Activated naive CD4-positive, alpha-beta T cell treated with anti-CD3 and anti-CD28 coated beads for 36 hours (primary cell): ENCODE measurements at regions of chr3 and their contacts with region 1.

Region 1: DNA sequence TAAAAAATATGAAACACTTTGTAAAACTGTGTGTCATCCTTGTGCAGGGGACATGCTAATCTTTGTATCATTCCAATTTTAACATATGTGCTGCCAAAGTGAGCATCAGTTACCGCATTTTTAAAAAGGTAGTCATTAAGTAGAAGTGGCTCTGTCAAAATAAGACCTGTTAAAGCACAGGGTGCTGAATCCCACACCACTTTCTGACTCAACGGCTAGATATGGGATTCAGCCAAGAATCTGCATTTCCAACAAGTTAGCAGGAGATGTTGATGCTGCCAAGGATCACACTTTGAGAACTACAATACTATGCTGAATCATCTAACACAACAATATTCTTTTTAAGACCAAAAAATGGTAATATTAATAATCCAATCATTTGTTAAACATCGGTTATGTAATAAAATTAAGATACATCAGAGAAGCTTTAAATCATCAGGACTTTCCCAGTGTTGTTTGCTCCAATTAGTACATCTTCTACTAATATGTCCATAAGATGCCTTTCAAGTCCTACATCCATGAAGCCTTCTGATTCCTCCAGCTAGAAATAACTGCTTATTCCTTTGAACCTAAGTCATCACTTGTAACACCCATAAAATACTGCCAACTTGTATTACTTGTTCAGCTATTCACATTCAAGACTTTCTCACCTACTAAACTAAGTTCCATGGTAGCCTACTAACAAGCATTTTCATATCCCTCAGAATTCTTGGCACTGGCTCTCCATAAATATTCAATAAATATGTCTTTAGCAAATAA is 71.1 kb downstream of the TBL1XR1 start:
- DNase-seq: no peak
- H3K4me3 Mint-ChIP-seq: no peak overlapping the region
- H3K27ac Mint-ChIP-seq: no peak overlapping the region
- H3K4me1 Mint-ChIP-seq: peaks cover 76% of the 10 kb centered on the region
- H3K27me3 Mint-ChIP-seq: no peaks in the 10 kb centered on the region

Region 2: DNA sequence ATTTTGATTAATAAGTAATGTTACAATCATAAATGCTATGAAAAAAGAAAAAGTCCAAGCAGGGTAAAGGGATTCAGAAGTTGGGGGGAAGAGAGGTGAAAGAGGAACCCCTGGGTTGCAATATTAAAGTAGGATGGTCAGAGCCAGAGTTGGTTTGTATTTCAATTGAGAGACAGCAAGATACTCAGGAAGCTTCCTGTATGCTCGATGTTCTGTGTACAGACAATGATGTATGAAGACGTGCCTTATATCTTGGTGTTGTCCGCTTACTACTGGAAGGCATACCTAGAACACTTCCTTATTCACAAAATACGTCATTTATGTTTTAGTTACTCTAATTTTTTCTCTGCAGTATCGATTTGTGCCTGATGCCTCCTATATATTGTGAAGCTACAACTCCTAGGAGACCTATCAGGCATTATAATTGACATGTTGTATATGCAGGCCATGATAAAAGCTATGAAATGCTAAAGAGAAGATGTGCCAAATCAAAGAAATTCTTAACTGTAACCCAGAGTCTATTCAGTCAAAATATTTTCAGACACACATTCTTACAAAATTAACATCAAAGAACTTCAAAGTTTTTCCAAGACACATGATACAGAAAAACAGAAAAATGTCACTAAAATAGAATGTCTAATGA is 16.4 kb before region 1 on chr3:
- CTCF ChIA-PET with region 1: no interaction called
- intact Hi-C with region 1: loop called (anchors 2 kb)
- DNase-seq: no peak
- H3K4me3 Mint-ChIP-seq: no peak overlapping the region
- H3K27ac Mint-ChIP-seq: peak overlapping the region; percentile 46
- H3K4me1 Mint-ChIP-seq: peaks cover 66% of the 10 kb centered on the region
- H3K27me3 Mint-ChIP-seq: no peaks in the 10 kb centered on the region

Region 3: DNA sequence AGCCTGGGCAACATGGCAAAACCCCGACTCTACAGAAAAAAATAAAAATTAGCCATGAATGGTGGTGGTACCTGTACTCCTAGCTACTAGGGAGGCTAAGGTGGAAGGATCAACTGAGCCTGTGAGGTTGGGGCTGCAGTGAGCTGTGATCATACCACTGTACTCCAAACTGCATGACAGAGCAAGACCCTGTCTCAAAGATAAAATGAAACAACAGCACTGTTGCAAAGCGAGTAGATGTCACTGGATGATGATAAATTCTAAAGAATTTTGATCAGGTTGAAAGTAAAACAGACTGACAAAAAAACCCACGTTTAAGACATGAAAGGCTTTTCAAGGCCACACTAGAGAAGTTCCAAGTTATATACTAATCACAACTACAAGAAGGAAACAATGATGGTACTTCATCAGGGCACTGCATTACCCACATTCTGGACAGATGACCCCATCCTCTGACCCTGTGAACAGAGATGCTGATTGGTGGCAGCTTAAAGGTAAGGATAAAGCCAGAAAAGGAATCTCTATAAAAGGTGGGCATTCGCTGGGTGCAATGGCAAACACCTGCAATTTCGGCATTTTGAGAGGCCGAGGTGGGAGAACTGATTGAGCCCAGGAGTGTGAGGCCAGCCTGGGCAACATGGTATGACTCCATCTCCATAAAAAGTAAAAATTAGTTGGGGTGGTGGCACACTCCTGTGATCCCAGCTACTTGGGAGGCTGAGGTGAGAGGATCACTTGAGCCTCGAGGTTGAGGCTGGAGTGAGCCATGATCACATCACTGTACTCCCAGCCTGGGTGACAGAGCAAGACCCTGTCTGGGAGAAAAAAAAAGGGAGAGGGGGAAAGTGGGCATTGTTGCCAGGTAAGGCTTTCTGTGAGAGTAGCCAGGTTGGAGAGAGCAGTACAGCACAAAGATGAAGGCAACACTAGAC is 11.8 kb after region 1 on chr3:
- CTCF ChIA-PET with region 1: interaction called, 5 read pairs
- intact Hi-C with region 1: loop called (anchors 1 kb)
- DNase-seq: no peak
- H3K4me3 Mint-ChIP-seq: no peak overlapping the region
- H3K27ac Mint-ChIP-seq: peak overlapping the region; percentile 31
- H3K4me1 Mint-ChIP-seq: peaks cover 74% of the 10 kb centered on the region
- H3K27me3 Mint-ChIP-seq: no peaks in the 10 kb centered on the region

Region 4: GRCh38 chr3:177144923-177145780 is 19.0 kb after region 1 on chr3:
- CTCF ChIA-PET with region 1: interaction called, 5 read pairs
- intact Hi-C with region 1: loop called (anchors 2 kb)
- DNase-seq: no peak
- H3K4me3 Mint-ChIP-seq: no peak overlapping the region
- H3K27ac Mint-ChIP-seq: peak overlapping the region; percentile 56
- H3K4me1 Mint-ChIP-seq: peaks cover 67% of the 10 kb centered on the region
- H3K27me3 Mint-ChIP-seq: no peaks in the 10 kb centered on the region

Region 5: DNA sequence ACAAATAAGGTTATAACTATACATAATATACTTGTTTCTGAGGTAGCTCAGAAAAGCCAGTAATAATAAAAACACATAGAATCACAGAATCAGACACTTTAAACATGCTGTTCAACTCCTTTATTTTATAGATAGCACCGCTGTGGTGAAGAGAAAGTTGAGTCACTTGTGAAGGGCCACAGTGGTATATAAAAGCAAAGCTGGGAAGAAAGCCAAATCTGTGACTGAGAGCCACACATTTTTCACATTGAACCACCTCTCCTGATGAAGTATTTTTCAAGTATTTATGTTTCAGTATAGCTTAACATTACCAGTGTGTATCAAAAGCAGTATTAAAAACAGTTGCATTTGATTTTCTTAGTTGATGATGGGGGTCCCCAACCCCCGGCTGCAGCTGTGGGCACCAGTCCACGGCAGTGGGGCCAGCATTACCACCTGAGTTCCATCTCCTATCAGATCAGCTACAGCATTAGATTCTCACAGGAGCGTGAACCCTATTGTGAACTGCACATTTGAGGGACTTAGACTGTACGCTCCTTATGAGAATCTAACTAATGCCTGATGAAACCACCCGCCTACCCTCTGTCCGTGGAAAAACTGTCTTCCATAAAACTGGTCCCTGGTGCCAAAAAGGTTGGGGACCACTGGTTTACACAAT is 24.9 kb after region 1 on chr3:
- CTCF ChIA-PET with region 1: no interaction called
- intact Hi-C with region 1: loop called (anchors 2 kb)
- DNase-seq: peak; percentile 38
- H3K4me3 Mint-ChIP-seq: no peak overlapping the region
- H3K27ac Mint-ChIP-seq: no peak overlapping the region
- H3K4me1 Mint-ChIP-seq: peaks cover 54% of the 10 kb centered on the region
- H3K27me3 Mint-ChIP-seq: no peaks in the 10 kb centered on the region

Region 6: GRCh38 chr3:177251755-177252154 is 125.6 kb after region 1 on chr3:
- CTCF ChIA-PET with region 1: no interaction called
- intact Hi-C with region 1: no loop called
- DNase-seq: no peak
- H3K4me3 Mint-ChIP-seq: no peak overlapping the region
- H3K27ac Mint-ChIP-seq: no peak overlapping the region
- H3K4me1 Mint-ChIP-seq: no peaks in the 10 kb centered on the region
- H3K27me3 Mint-ChIP-seq: no peaks in the 10 kb centered on the region